Calu3 (cell line): ENCODE measurements at regions of chr4 and their contacts with region 1.

Region 1: GRCh38 chr4:67909905-67910584 is 26.2 kb upstream of the TMPRSS11D start:
- DNase-seq: no peak
- H3K4me3 Mint-ChIP-seq: no peak overlapping the region
- H3K27ac Mint-ChIP-seq: no peak overlapping the region
- H3K4me1 Mint-ChIP-seq: no peaks in the 10 kb centered on the region
- H3K27me3 Mint-ChIP-seq: no peaks in the 10 kb centered on the region
- CTCF ChIP-seq: peak; percentile 26

Region 2: GRCh38 chr4:67545199-67546003 is 364.6 kb before region 1 on chr4 and contains the start of gene CENPC:
- CTCF ChIA-PET with region 1: no interaction called
- intact Hi-C with region 1: loop called (anchors 5 kb)
- DNase-seq: peak; percentile 88
- H3K4me3 Mint-ChIP-seq: peak within 1 kb of the TSS; percentile 95
- H3K27ac Mint-ChIP-seq: peak within 1 kb of the TSS; percentile 95
- H3K4me1 Mint-ChIP-seq: peaks cover 7% of the 10 kb centered on the region
- H3K27me3 Mint-ChIP-seq: no peaks in the 10 kb centered on the region
- CTCF ChIP-seq: no peak
- total RNA-seq, gene CENPC: 10.7 and 12.9 TPM in 2 replicates

Region 3: GRCh38 chr4:67746797-67747495 is 163.1 kb before region 1 on chr4:
- CTCF ChIA-PET with region 1: no interaction called
- intact Hi-C with region 1: loop called (anchors 5 kb)
- DNase-seq: no peak
- H3K4me3 Mint-ChIP-seq: no peak overlapping the region
- H3K27ac Mint-ChIP-seq: no peak overlapping the region
- H3K4me1 Mint-ChIP-seq: no peaks in the 10 kb centered on the region
- H3K27me3 Mint-ChIP-seq: no peaks in the 10 kb centered on the region
- CTCF ChIP-seq: peak; percentile 29

Region 4: DNA sequence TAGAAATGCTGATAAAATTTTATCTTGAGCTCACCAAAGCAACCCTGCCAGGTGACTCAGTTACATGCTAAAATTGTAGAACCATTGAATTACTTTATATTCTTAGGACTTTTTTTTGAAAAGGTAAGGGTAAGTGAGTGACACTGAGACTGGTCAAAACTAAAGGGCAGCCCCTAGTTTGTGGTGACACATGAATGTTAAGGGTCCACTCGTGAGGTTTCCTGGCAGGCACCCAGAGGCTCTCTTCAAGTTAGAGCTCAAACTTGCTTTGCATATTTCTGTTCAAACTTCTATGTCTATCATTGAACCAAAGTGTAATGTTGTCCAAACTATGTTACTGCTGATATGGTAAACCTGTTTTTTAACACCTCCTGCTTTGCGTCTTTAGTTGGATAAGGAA is 56.7 kb before region 1 on chr4:
- CTCF ChIA-PET with region 1: no interaction called
- intact Hi-C with region 1: no loop called
- DNase-seq: no peak
- H3K4me3 Mint-ChIP-seq: no peak overlapping the region
- H3K27ac Mint-ChIP-seq: no peak overlapping the region
- H3K4me1 Mint-ChIP-seq: no peaks in the 10 kb centered on the region
- H3K27me3 Mint-ChIP-seq: no peaks in the 10 kb centered on the region
- CTCF ChIP-seq: no peak

Region 5: GRCh38 chr4:67871867-67872266 is 38.2 kb before region 1 on chr4:
- CTCF ChIA-PET with region 1: no interaction called
- intact Hi-C with region 1: loop called (anchors 2 kb)
- DNase-seq: no peak
- H3K4me3 Mint-ChIP-seq: no peak overlapping the region
- H3K27ac Mint-ChIP-seq: no peak overlapping the region
- H3K4me1 Mint-ChIP-seq: no peaks in the 10 kb centered on the region
- H3K27me3 Mint-ChIP-seq: no peaks in the 10 kb centered on the region
- CTCF ChIP-seq: no peak

Region 6: DNA sequence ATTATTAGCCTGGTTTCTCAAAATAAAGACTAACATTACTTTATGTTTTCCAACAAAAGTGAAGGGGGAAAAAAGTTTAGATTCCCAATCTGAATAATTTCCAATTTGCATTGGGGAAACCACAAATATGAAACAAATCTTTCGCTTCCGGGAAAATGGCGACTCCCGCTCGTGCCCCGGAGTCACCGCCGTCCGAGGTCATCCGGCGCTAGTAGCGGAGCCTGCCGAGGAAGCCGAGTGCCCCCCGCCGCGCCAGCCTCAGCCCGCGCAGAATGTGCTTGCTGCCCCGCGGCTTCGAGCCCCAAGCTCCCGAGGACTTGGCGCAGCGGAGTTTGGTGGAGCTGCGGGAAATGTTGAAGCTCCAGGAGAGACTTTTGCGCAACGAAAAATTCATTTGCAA is 128.2 kb after region 1 on chr4:
- CTCF ChIA-PET with region 1: no interaction called
- intact Hi-C with region 1: no loop called
- DNase-seq: no peak
- H3K4me3 Mint-ChIP-seq: no peak overlapping the region
- H3K27ac Mint-ChIP-seq: no peak overlapping the region
- H3K4me1 Mint-ChIP-seq: no peaks in the 10 kb centered on the region
- H3K27me3 Mint-ChIP-seq: no peaks in the 10 kb centered on the region
- CTCF ChIP-seq: no peak